CD8-positive, alpha-beta T cell (primary cell): ENCODE measurements at regions of chr1 and their contacts with region 1.

Region 1: DNA sequence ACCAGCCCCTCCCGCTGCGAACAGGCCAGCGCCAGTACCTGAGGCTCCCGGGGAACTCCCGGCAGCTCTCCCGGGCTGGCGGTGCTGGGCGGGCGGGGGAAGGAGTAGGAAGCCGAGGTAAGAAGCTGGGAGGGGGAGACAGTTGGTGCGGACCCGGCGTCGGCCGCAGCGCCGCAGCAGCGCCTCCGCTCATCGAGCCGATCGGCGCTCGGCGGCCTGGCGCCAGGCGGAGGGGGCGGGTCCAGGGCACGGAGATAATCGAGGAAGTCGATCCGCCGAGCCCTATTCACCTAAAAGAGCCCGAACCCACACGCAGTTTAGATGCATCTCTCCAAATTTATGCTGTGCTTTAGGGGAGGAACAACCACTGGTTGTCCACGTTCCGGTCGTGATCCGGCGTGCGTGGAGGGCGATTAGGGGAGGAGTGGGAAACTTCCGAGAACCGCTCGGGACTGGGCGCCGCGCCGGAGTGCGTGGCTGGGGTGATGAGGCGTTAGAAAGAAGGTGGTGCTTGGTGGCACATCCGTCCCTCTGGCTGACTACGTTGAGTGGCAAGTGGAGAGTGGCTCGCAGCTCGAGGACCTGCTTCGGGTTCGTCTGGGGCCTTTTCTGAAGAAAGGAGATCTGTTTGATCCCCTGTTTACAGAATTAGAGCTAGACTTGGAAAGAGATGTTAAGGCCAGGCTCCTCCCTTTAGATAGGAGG is at the start of gene VAMP4:
- DNase-seq: peak; percentile 72 to 93 (median 85)
- ATAC-seq: peak; percentile 87
- H3K4me3 ChIP-seq: peak within 1 kb of the TSS; percentile 94 to 99
- H3K4me3 Mint-ChIP-seq: peak within 1 kb of the TSS; percentile 100
- H3K27ac ChIP-seq: peak within 1 kb of the TSS; percentile 96 to 99
- H3K27ac Mint-ChIP-seq: peak within 1 kb of the TSS; percentile 100
- H3K4me1 ChIP-seq: peaks cover 39% of the 10 kb centered on the region
- H3K4me1 Mint-ChIP-seq: peaks cover 51% of the 10 kb centered on the region
- H3K27me3 ChIP-seq: no peaks in the 10 kb centered on the region
- H3K27me3 Mint-ChIP-seq: no peaks in the 10 kb centered on the region
- CTCF ChIP-seq: no peak
- total RNA-seq, gene VAMP4: 8.4 to 8.6 TPM

Region 2: GRCh38 chr1:171576144-171576543 is 165.9 kb before region 1 on chr1:
- CTCF ChIA-PET with region 1: no interaction called
- POLR2A ChIA-PET with region 1: no interaction called
- intact Hi-C with region 1: loop called in 1 of 2 experiments (anchors 10 kb)
- DNase-seq: no peak
- ATAC-seq: no peak
- H3K4me3 ChIP-seq: no peak overlapping the region
- H3K4me3 Mint-ChIP-seq: no peak overlapping the region
- H3K27ac ChIP-seq: no peak overlapping the region
- H3K27ac Mint-ChIP-seq: no peak overlapping the region
- H3K4me1 ChIP-seq: no peaks in the 10 kb centered on the region
- H3K4me1 Mint-ChIP-seq: peaks cover 6% of the 10 kb centered on the region
- H3K27me3 ChIP-seq: no peaks in the 10 kb centered on the region
- H3K27me3 Mint-ChIP-seq: no peaks in the 10 kb centered on the region
- CTCF ChIP-seq: no peak

Region 3: DNA sequence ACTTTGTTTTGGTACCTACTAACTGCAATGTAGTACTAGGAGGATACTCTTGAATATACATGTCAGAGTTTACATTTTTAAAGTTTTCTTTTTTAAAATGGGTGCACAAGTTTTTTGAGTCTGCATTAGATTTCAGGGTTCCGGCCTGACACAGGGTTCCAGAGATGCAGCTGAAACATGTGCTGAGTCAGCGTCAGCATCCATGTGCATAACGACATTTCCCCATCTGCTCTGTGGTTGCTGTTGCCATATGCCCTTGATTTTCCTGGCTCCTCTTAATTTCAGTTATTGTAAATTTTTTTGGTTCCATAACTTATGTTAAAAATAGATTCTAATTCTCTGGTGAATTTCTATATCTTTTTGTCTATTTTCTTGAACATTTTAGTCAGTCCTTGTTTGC is 27.1 kb after region 1 on chr1:
- CTCF ChIA-PET with region 1: interaction called, 3 read pairs
- POLR2A ChIA-PET with region 1: interaction called, 13 read pairs
- intact Hi-C with region 1: no loop called
- DNase-seq: no peak
- ATAC-seq: no peak
- H3K4me3 ChIP-seq: no peak overlapping the region
- H3K4me3 Mint-ChIP-seq: no peak overlapping the region
- H3K27ac ChIP-seq: no peak overlapping the region
- H3K27ac Mint-ChIP-seq: no peak overlapping the region
- H3K4me1 ChIP-seq: no peaks in the 10 kb centered on the region
- H3K4me1 Mint-ChIP-seq: no peaks in the 10 kb centered on the region
- H3K27me3 ChIP-seq: peaks cover 0 to 2% of the 10 kb centered on the region in 2 experiments
- H3K27me3 Mint-ChIP-seq: peaks cover 21% of the 10 kb centered on the region
- CTCF ChIP-seq: no peak

Region 4: DNA sequence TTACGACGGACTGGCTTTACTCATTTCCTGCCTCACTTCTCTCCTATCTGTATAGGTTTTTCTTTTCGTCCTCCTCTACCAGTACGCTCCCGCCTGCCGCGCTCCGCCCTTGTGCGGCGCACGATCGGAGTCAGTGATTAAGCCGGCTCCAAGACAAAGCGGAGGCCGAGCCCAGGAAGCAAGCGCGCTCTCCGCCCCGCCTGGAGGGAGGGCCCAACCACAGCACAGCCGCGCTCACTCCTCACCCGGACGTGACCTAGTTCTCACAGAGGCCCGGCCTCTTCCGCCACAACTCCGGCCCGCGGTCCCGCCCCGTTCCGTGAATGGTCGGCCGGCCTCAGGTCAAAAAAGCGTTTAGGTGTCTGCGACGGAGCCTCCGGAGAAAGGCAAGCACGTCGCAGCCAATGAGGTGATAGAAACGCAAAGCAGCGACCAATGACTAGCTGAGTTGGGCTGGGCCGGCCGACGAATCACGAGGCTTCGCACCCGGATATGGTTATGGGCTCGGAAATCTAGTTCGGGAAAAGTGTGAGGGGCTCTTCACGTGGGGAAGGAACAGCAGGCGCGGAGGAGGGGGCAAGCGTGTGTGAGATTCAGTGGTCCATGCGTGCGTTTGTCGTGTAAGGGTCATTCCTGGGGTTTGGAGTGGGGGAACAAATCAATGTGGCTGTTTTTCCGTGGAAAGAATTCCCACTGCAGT is 39.3 kb after region 1 on chr1 and contains the start of gene METTL13:
- CTCF ChIA-PET with region 1: interaction called, 14 read pairs
- POLR2A ChIA-PET with region 1: interaction called, 57 read pairs
- intact Hi-C with region 1: loop called (anchors 1 kb)
- DNase-seq: peak; percentile 96 to 99 (median 98)
- ATAC-seq: peak; percentile 90
- H3K4me3 ChIP-seq: peak within 1 kb of the TSS; percentile 89 to 92
- H3K4me3 Mint-ChIP-seq: peak within 1 kb of the TSS; percentile 95
- H3K27ac ChIP-seq: peak within 1 kb of the TSS; percentile 75 to 89
- H3K27ac Mint-ChIP-seq: peak within 1 kb of the TSS; percentile 96
- H3K4me1 ChIP-seq: peaks cover 33% of the 10 kb centered on the region
- H3K4me1 Mint-ChIP-seq: peaks cover 54% of the 10 kb centered on the region
- H3K27me3 ChIP-seq: no peaks in the 10 kb centered on the region
- H3K27me3 Mint-ChIP-seq: no peaks in the 10 kb centered on the region
- CTCF ChIP-seq: no peak
- total RNA-seq, gene METTL13: 6.6 to 6.9 TPM

Region 5: GRCh38 chr1:171841050-171841940 is 99.3 kb after region 1 on chr1 and contains the start of gene DNM3:
- CTCF ChIA-PET with region 1: no interaction called
- POLR2A ChIA-PET with region 1: interaction called, 5 read pairs
- intact Hi-C with region 1: loop called (anchors 1 to 2 kb)
- DNase-seq: peak; percentile 51 to 89 (median 77)
- ATAC-seq: peak; percentile 94
- H3K4me3 ChIP-seq: peak within 1 kb of the TSS; percentile 75 to 80
- H3K4me3 Mint-ChIP-seq: peak within 1 kb of the TSS; percentile 87
- H3K27ac ChIP-seq: no peak within 1 kb of the TSS
- H3K27ac Mint-ChIP-seq: peak within 1 kb of the TSS; percentile 16
- H3K4me1 ChIP-seq: peaks cover 9% of the 10 kb centered on the region
- H3K4me1 Mint-ChIP-seq: peaks cover 14% of the 10 kb centered on the region
- H3K27me3 ChIP-seq: peaks cover 4 to 9% of the 10 kb centered on the region in 2 experiments
- H3K27me3 Mint-ChIP-seq: peaks cover 16% of the 10 kb centered on the region
- CTCF ChIP-seq: no peak
- total RNA-seq, gene DNM3: 0.72 to 1.1 TPM

Region 6: GRCh38 chr1:171890131-171890530 is 148.1 kb after region 1 on chr1:
- CTCF ChIA-PET with region 1: no interaction called
- POLR2A ChIA-PET with region 1: no interaction called
- intact Hi-C with region 1: no loop called
- DNase-seq: no peak
- ATAC-seq: no peak
- H3K4me3 ChIP-seq: no peak overlapping the region
- H3K4me3 Mint-ChIP-seq: no peak overlapping the region
- H3K27ac ChIP-seq: no peak overlapping the region
- H3K27ac Mint-ChIP-seq: no peak overlapping the region
- H3K4me1 ChIP-seq: no peaks in the 10 kb centered on the region
- H3K4me1 Mint-ChIP-seq: no peaks in the 10 kb centered on the region
- H3K27me3 ChIP-seq: no peaks in the 10 kb centered on the region
- H3K27me3 Mint-ChIP-seq: no peaks in the 10 kb centered on the region
- CTCF ChIP-seq: no peak

Region 7: GRCh38 chr1:172180501-172181285 is 438.7 kb after region 1 on chr1:
- CTCF ChIA-PET with region 1: no interaction called
- POLR2A ChIA-PET with region 1: no interaction called
- intact Hi-C with region 1: loop called in 1 of 2 experiments (anchors 5 kb)
- DNase-seq: peak in 7 of 9 experiments; percentile 13 to 73 (median 44)
- ATAC-seq: peak; percentile 66
- H3K4me3 ChIP-seq: peak overlapping the region; percentile 17 to 37
- H3K4me3 Mint-ChIP-seq: peak overlapping the region; percentile 76
- H3K27ac ChIP-seq: peak overlapping the region; percentile 46 to 87
- H3K27ac Mint-ChIP-seq: peak overlapping the region; percentile 96
- H3K4me1 ChIP-seq: peaks cover 24% of the 10 kb centered on the region
- H3K4me1 Mint-ChIP-seq: peaks cover 37% of the 10 kb centered on the region
- H3K27me3 ChIP-seq: no peaks in the 10 kb centered on the region
- H3K27me3 Mint-ChIP-seq: no peaks in the 10 kb centered on the region
- CTCF ChIP-seq: no peak